ENCODE measurements at regions of chr3 and their contacts with region 1.

Region 1: DNA sequence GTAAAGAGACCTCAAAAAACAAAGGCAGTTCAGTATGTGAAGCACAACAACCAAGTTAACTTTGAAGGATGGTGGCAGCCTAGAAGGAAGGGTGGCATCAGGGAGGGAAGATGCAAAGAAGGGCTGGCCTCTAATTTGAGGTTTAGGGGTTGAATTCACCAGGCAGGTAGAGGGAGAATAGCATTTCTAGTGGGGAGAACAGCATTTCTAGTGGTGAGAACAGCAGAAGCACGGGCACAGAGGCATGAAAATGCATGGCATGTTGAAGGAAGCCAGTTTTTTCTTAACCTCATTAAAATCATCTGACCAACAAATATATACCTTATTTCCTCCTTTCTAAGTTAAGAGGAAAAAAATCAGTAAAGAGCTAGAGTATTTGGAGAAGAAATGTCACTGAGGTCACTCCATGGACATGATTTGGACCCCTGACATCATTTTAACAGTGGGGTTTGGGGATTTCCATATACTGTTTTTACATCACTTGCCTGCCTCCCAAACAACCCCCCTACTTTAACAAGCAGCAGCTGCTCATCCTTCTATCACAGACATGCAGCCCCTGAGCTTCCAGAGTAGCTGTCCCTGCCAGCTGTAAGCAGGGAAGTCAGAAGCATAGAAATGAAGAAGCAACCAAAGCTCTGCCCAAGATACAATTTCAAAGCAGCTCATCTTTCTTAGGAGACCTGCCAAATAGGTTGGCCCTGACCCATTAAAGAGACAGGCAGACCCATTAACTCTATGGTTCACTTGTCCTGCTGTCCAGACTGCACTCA is 2.4 kb upstream of the POPDC2 start:
- DNase-seq: no peak
- H3K4me3 ChIP-seq: no peak overlapping the region
- H3K4me3 Mint-ChIP-seq: peak overlapping the region in 1 of 8 donors; percentile 24
- H3K27ac ChIP-seq: no peak overlapping the region
- H3K27ac Mint-ChIP-seq: peak overlapping the region in 4 of 7 donors; percentile 19 to 82 (median 66)
- H3K4me1 ChIP-seq: no peaks in the 10 kb centered on the region
- H3K4me1 Mint-ChIP-seq: peaks cover 0 to 1% (median 0%) of the 10 kb centered on the region in 4 donors
- H3K27me3 ChIP-seq: no peaks in the 10 kb centered on the region
- H3K27me3 Mint-ChIP-seq: no peaks in the 10 kb centered on the region

Region 2: DNA sequence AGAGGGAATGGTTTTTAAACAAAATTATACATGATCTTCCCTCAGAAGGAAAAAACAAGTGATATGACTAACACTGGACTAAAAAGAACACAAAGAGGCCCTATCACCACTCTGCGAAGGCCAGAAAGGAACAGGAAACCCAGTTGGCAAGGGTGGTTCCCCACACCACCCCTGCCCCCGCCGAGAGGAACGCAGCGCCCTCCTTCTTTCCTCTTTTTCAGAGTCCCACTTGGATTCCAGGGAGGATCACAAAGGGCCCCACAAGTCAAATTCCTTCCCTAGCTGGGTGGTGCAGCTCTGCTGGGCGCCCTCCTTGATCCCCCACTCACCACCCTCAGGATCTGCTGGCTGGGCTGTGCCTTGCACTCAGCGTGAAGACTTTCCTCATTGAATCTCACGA is 35.3 kb before region 1 on chr3:
- CTCF ChIA-PET with region 1: no interaction called
- POLR2A ChIA-PET with region 1: no interaction called
- intact Hi-C with region 1: loop called (anchors 1 kb)
- DNase-seq: no peak
- H3K4me3 ChIP-seq: no peak overlapping the region
- H3K4me3 Mint-ChIP-seq: peak overlapping the region in 7 of 8 donors; percentile 5 to 73 (median 48)
- H3K27ac ChIP-seq: no peak overlapping the region
- H3K27ac Mint-ChIP-seq: peak overlapping the region in 5 of 7 donors; percentile 18 to 85 (median 58)
- H3K4me1 ChIP-seq: peaks cover 34% of the 10 kb centered on the region
- H3K4me1 Mint-ChIP-seq: peaks cover 19 to 36% (median 24%) of the 10 kb centered on the region in 4 donors
- H3K27me3 ChIP-seq: no peaks in the 10 kb centered on the region
- H3K27me3 Mint-ChIP-seq: peaks cover 1 to 2% of the 10 kb centered on the region in 2 donors